Activated CD4-positive, alpha-beta memory T cell treated with anti-CD3 and anti-CD28 coated beads for 36 hours (primary cell): ENCODE measurements at regions of chr10 and their contacts with region 1.

Region 1: DNA sequence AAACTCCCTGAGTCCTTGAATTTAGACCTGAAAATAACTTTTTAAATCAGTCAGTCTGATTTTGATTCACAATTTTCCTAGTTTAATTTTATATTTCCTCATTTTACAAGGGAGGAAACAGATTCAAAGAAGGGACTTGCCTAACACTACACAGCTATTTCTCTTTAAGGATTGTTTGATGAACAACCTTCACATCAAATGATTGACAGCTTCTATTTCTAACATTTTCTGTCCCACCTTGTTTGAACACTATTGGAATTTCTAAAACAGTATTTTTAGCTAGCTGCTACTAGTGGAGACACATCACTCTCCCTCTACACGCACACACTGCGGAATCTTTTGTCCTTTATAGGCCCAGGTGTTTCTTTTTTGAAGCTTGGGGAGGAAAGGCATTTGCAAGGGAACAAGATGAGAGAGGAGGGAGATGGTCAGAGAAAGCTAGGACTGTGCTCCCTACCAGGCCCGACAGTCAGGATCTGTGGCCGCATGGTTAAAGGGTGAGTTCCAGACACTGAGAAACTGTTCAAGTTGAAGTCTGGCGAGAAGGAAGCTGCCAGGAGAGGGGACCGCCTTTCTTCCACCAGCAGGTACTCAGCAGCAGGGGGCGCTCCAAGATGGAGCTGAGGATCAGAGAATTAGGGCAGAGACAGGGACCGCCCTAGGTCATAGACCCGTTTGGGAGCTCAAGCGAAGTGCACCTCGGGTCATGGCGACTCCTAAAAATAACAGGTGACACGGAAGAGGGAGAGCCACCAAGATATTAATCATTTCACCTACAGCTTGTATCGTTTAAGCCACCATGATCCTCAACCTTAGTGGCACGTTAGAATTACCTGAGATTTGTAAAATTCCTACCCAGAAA is 49.7 kb downstream of the DNAJC12 start:
- DNase-seq: peak; percentile 91
- H3K4me3 Mint-ChIP-seq: no peak overlapping the region
- H3K27ac Mint-ChIP-seq: peak overlapping the region; percentile 11
- H3K4me1 Mint-ChIP-seq: peaks cover 57% of the 10 kb centered on the region
- H3K27me3 Mint-ChIP-seq: no peaks in the 10 kb centered on the region

Region 2: GRCh38 chr10:67764012-67764822 is 24.0 kb before region 1 on chr10:
- CTCF ChIA-PET with region 1: interaction called, 7 read pairs
- POLR2A ChIA-PET with region 1: interaction called, 4 read pairs
- intact Hi-C with region 1: loop called (anchors 2 kb)
- DNase-seq: peak; percentile 98
- H3K4me3 Mint-ChIP-seq: peak overlapping the region; percentile 78
- H3K27ac Mint-ChIP-seq: peak overlapping the region; percentile 91
- H3K4me1 Mint-ChIP-seq: peaks cover 11% of the 10 kb centered on the region
- H3K27me3 Mint-ChIP-seq: peaks cover 4% of the 10 kb centered on the region

Region 3: DNA sequence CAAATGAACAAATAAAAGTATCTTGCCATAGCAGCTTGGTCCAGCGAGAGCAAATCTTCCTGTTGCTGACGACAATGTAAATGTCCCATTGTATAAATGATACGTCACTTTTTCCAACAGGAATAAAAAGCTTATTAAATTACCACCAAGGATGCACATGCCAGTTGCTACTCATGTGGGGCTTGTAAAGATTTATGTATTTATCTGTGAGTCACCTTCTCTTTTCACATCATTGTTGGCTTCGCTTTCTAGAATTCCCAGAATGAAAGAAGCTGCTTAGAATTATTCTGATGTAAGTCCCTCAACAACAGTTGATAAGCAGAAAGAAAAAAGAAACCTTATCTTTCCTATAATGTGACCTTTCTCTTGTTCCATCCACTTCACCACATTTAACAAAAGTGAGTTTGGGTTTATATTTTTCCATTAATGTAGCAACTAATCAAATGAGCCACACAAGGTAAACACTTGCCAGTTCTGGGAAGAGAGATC is 27.4 kb after region 1 on chr10:
- CTCF ChIA-PET with region 1: interaction called, 16 read pairs
- POLR2A ChIA-PET with region 1: interaction called, 15 read pairs
- intact Hi-C with region 1: loop called (anchors 1 kb)
- DNase-seq: no peak
- H3K4me3 Mint-ChIP-seq: no peak overlapping the region
- H3K27ac Mint-ChIP-seq: peak overlapping the region; percentile 76
- H3K4me1 Mint-ChIP-seq: peaks cover 28% of the 10 kb centered on the region
- H3K27me3 Mint-ChIP-seq: peaks cover 3% of the 10 kb centered on the region

Region 4: GRCh38 chr10:67827811-67828210 is 39.6 kb after region 1 on chr10:
- CTCF ChIA-PET with region 1: no interaction called
- POLR2A ChIA-PET with region 1: no interaction called
- intact Hi-C with region 1: no loop called
- DNase-seq: no peak
- H3K4me3 Mint-ChIP-seq: no peak overlapping the region
- H3K27ac Mint-ChIP-seq: no peak overlapping the region
- H3K4me1 Mint-ChIP-seq: no peaks in the 10 kb centered on the region
- H3K27me3 Mint-ChIP-seq: no peaks in the 10 kb centered on the region

Region 5: DNA sequence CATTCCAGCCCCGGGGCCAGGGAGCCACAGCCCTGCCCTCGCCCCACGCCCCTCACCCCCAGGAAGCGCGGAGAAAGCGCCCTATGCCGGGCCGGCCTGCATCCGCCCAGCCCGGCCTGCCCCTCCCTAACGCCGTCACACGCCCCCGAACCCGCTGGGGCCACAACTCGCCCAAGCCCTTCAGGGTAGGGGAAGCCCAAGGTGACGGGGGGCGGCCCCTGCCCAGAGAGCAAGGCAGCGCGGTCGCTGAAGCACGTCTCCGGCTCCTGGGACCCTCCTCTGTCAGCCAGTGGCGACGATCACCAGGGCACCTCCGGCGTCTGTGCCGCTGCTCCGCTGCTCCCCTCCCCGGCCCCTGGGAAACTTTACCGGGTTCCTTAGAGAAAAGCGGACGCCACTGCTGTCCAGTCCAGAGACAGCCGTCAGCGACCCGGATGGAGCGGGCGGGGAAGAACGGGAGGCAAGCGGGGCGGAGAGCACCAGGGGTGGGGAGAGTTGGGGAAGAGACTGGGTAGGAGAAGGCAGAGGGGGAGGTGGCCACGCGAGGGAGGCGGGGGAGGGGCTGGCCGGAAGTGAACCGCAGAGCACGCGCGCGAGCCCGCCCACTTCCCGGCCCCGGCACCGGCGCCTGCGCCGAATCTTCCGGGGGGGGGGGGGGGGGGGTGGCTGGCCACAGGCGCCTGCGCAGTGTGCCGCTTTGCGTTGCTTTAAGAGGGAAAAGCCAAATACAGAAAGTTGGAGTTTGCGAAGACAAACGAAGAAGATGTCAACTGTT is 286.7 kb after region 1 on chr10 and contains the start of gene HERC4:
- CTCF ChIA-PET with region 1: interaction called, 3 read pairs
- POLR2A ChIA-PET with region 1: no interaction called
- intact Hi-C with region 1: loop called (anchors 2 kb)
- DNase-seq: peak; percentile 94
- H3K4me3 Mint-ChIP-seq: peak within 1 kb of the TSS; percentile 89
- H3K27ac Mint-ChIP-seq: peak within 1 kb of the TSS; percentile 89
- H3K4me1 Mint-ChIP-seq: peaks cover 35% of the 10 kb centered on the region
- H3K27me3 Mint-ChIP-seq: no peaks in the 10 kb centered on the region
- total RNA-seq, gene HERC4: 55.7 to 59.0 TPM

Region 6: DNA sequence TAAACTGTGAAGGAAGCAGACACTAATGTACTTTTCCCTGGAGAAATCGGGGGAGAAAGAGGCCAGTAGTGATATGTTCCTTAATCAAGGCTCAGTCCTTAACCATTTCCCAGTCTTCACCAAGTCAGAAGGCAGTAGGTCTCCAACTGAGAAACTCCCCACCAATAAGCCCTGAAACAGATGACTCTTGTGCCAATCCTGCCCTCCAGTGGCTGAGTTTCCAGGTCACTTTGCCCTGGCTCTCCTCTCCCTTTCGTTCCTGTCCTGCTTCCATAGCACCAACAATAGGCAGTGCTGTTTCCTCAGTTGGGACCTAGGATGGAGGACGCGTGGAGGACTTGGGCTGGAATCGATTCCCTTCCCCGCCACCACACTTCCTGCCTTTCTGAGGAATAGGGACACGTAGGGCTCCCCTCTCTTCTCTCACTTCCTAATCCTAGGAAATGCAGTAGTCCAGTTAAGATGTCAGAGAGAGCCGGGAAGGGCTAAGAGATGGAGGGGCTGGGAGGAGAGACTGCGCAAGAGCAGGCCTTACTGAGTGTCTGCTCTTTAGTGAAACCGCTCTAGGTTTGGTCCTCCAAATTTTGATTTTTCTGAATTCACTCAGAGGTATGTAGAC is 420.3 kb after region 1 on chr10:
- CTCF ChIA-PET with region 1: interaction called, 3 read pairs
- POLR2A ChIA-PET with region 1: no interaction called
- intact Hi-C with region 1: loop called (anchors 5 kb)
- DNase-seq: peak; percentile 57
- H3K4me3 Mint-ChIP-seq: no peak overlapping the region
- H3K27ac Mint-ChIP-seq: no peak overlapping the region
- H3K4me1 Mint-ChIP-seq: no peaks in the 10 kb centered on the region
- H3K27me3 Mint-ChIP-seq: peaks cover 8% of the 10 kb centered on the region